ENCODE measurements at regions of chr6 and their contacts with region 1.

Region 1: GRCh38 chr6:122789182-122790027 is at the start of gene SMPDL3A:
- DNase-seq: peak; percentile 84 to 86
- ATAC-seq: peak; percentile 69 to 79
- H3K4me3 ChIP-seq: peak within 1 kb of the TSS; percentile 61 to 94 (median 80)
- H3K27ac ChIP-seq: peak within 1 kb of the TSS; percentile 93 to 98 (median 96)
- H3K4me1 ChIP-seq: peaks cover 36 to 45% of the 10 kb centered on the region in 2 donors
- H3K27me3 ChIP-seq: no peaks in the 10 kb centered on the region
- CTCF ChIP-seq: peak; percentile 22 to 45 (median 37)
- POLR2A ChIP-seq: peak; percentile 82 to 91
- total RNA-seq, gene SMPDL3A: 18.4 to 38.4 (median 32.6) TPM

Region 2: GRCh38 chr6:122484760-122485159 is 304.6 kb before region 1 on chr6:
- in situ Hi-C with region 1: no loop called
- intact Hi-C with region 1: no loop called
- DNase-seq: no peak
- ATAC-seq: no peak
- H3K4me3 ChIP-seq: no peak overlapping the region
- H3K27ac ChIP-seq: no peak overlapping the region
- H3K4me1 ChIP-seq: no peaks in the 10 kb centered on the region
- H3K27me3 ChIP-seq: no peaks in the 10 kb centered on the region
- CTCF ChIP-seq: no peak
- POLR2A ChIP-seq: no peak

Region 3: GRCh38 chr6:122753688-122754056 is 35.7 kb before region 1 on chr6:
- in situ Hi-C with region 1: no loop called
- intact Hi-C with region 1: loop called (anchors 2 kb)
- DNase-seq: peak; percentile 14 to 39
- ATAC-seq: peak; percentile 61 to 72
- H3K4me3 ChIP-seq: peak overlapping the region; percentile 40 to 51 (median 46)
- H3K27ac ChIP-seq: peak overlapping the region; percentile 76 to 84 (median 80)
- H3K4me1 ChIP-seq: peaks cover 14 to 18% of the 10 kb centered on the region in 2 donors
- H3K27me3 ChIP-seq: no peaks in the 10 kb centered on the region
- CTCF ChIP-seq: no peak
- POLR2A ChIP-seq: peak in 1 of 2 donors; percentile 26

Region 4: DNA sequence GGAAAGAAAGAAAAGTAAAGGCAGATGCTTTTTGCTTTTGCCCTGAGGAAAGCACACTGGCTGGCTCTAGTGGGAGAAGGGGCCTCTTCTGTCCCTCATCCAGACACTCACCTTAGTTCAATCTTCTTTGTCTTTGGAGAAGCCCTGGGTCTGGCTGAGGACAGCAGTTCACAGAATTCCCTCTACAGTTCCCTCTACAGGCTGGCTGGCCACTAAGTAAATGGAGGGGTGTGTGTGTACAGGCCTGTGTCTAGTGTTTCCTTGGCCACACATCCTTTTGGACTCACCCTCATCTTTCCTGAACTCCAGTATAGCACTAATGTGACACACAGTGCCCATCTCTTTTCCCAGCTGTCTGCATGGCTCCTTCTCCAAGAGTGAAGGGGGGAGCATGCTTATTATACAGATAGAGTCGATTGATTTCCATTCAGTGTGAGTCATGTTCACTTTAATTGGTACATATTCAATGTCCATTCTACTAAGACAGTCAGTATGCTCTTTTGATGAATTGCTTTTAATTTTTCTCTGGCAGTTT is 180.7 kb after region 1 on chr6:
- in situ Hi-C with region 1: no loop called
- intact Hi-C with region 1: no loop called
- DNase-seq: no peak
- ATAC-seq: no peak
- H3K4me3 ChIP-seq: no peak overlapping the region
- H3K27ac ChIP-seq: no peak overlapping the region
- H3K4me1 ChIP-seq: no peaks in the 10 kb centered on the region
- H3K27me3 ChIP-seq: no peaks in the 10 kb centered on the region
- CTCF ChIP-seq: no peak
- POLR2A ChIP-seq: no peak